CD4-positive, alpha-beta T cell (primary cell): ENCODE measurements at regions of chr10 and their contacts with region 1.

Region 1: GRCh38 chr10:97914837-97915211 is 65.2 kb downstream of the GOLGA7B start:
- DNase-seq: peak; percentile 57 to 80 (median 68)
- ATAC-seq: peak; percentile 84
- H3K4me3 ChIP-seq: no peak overlapping the region
- H3K4me3 Mint-ChIP-seq: no peak overlapping the region
- H3K27ac ChIP-seq: no peak overlapping the region
- H3K27ac Mint-ChIP-seq: no peak overlapping the region
- H3K4me1 ChIP-seq: peaks cover 8% of the 10 kb centered on the region
- H3K4me1 Mint-ChIP-seq: peaks cover 15% of the 10 kb centered on the region
- H3K27me3 ChIP-seq: no peaks in the 10 kb centered on the region
- H3K27me3 Mint-ChIP-seq: peaks cover 21% of the 10 kb centered on the region
- CTCF ChIP-seq: peak; percentile 85

Region 2: GRCh38 chr10:98045785-98046389 is 131.1 kb after region 1 on chr10:
- CTCF ChIA-PET with region 1: interaction called, 14 read pairs
- POLR2A ChIA-PET with region 1: interaction called, 4 read pairs
- intact Hi-C with region 1: loop called (anchors 1 to 2 kb)
- DNase-seq: peak; percentile 29 to 78 (median 44)
- ATAC-seq: peak; percentile 88
- H3K4me3 ChIP-seq: no peak overlapping the region
- H3K4me3 Mint-ChIP-seq: no peak overlapping the region
- H3K27ac ChIP-seq: no peak overlapping the region
- H3K27ac Mint-ChIP-seq: no peak overlapping the region
- H3K4me1 ChIP-seq: peaks cover 3% of the 10 kb centered on the region
- H3K4me1 Mint-ChIP-seq: no peaks in the 10 kb centered on the region
- H3K27me3 ChIP-seq: peaks cover 13 to 25% of the 10 kb centered on the region in 2 experiments
- H3K27me3 Mint-ChIP-seq: peaks cover 39% of the 10 kb centered on the region
- CTCF ChIP-seq: peak; percentile 90

Region 3: DNA sequence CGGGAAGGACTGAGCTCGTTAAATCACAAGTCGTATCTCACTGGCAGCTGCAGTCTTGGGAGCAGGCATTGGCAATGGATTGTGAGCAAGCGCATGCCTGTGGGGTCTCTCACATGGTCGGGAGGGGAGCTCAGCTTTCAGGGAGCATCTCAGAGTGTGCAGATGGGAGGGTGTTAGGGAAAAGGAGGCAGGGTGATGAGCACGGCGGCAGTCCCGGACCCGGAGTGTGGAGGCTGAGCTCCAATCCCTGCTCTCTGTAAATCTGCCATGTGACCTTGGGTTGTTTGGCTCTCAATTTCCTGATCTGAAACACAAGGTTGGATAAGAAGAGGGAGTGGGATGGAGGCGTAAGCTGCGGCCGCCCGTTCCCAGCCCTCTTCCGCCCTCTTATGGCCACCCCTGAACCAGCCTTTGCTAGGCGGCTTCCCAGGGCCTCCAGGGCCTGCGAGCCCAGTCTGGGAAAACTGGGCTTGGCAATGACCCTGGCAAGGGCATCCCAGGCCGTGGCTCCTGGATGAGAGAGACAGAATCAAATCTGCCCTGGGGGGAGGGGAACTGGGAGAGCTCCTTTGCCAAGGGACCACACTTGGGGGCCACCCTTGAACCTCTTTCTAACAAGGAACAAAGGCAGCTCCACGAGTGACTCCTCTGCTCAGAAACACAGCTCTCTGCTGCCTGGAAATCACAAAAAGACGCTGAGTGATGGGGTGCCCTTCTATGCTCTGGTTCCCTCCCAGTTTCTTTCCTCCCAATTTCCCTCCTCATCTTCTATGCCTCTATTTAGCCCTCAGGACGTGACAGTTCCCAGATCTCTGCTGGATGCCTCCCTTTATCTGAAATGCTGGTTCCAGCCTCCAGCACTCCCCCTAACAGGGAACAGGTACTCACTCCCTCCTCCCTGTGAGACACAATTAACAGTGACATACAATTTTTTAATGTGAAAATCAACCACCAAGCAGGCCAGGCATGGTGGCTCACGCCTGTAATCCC is 394.8 kb after region 1 on chr10:
- CTCF ChIA-PET with region 1: no interaction called
- POLR2A ChIA-PET with region 1: no interaction called
- intact Hi-C with region 1: loop called in 1 of 2 experiments (anchors 10 kb)
- DNase-seq: peak in 2 of 14 experiments; percentile 32
- ATAC-seq: no peak
- H3K4me3 ChIP-seq: no peak overlapping the region
- H3K4me3 Mint-ChIP-seq: no peak overlapping the region
- H3K27ac ChIP-seq: no peak overlapping the region
- H3K27ac Mint-ChIP-seq: no peak overlapping the region
- H3K4me1 ChIP-seq: peaks cover 3% of the 10 kb centered on the region
- H3K4me1 Mint-ChIP-seq: no peaks in the 10 kb centered on the region
- H3K27me3 ChIP-seq: peaks cover 15 to 32% of the 10 kb centered on the region in 2 experiments
- H3K27me3 Mint-ChIP-seq: peaks cover 75% of the 10 kb centered on the region
- CTCF ChIP-seq: no peak

Region 4: GRCh38 chr10:98664331-98665042 is 749.7 kb after region 1 on chr10:
- CTCF ChIA-PET with region 1: no interaction called
- POLR2A ChIA-PET with region 1: no interaction called
- intact Hi-C with region 1: loop called in 1 of 2 experiments (anchors 10 kb)
- DNase-seq: peak in 8 of 14 experiments; percentile 0 to 65 (median 27)
- ATAC-seq: no peak
- H3K4me3 ChIP-seq: no peak overlapping the region
- H3K4me3 Mint-ChIP-seq: no peak overlapping the region
- H3K27ac ChIP-seq: no peak overlapping the region
- H3K27ac Mint-ChIP-seq: no peak overlapping the region
- H3K4me1 ChIP-seq: no peaks in the 10 kb centered on the region
- H3K4me1 Mint-ChIP-seq: no peaks in the 10 kb centered on the region
- H3K27me3 ChIP-seq: peaks cover 0 to 3% of the 10 kb centered on the region in 2 experiments
- H3K27me3 Mint-ChIP-seq: peaks cover 31% of the 10 kb centered on the region
- CTCF ChIP-seq: peak; percentile 61

Region 5: DNA sequence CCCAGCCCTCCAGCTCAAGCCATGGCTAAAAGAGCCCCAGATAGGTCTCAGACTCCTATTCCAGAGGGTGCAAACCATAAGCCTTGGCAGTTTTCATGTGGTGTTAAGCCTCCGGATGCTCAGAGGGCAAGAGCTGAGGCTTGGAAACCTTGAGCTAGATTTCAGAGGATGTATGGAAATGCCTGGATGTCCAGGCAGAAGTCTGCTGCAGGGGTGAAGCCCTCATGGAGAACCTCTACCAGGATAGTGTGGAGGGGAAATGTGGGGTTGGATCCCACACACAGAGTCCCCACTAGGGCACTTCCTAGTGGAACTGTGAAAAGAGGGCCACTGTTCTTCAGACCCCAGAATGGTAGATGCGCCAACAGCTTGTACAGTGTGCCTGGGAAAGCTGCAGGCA is 1334.0 kb after region 1 on chr10:
- CTCF ChIA-PET with region 1: no interaction called
- POLR2A ChIA-PET with region 1: no interaction called
- intact Hi-C with region 1: loop called in 1 of 2 experiments (anchors 5 kb)
- DNase-seq: no peak
- ATAC-seq: no peak
- H3K4me3 ChIP-seq: no peak overlapping the region
- H3K4me3 Mint-ChIP-seq: no peak overlapping the region
- H3K27ac ChIP-seq: no peak overlapping the region
- H3K27ac Mint-ChIP-seq: no peak overlapping the region
- H3K4me1 ChIP-seq: no peaks in the 10 kb centered on the region
- H3K4me1 Mint-ChIP-seq: no peaks in the 10 kb centered on the region
- H3K27me3 ChIP-seq: peaks cover 4 to 8% of the 10 kb centered on the region in 2 experiments
- H3K27me3 Mint-ChIP-seq: peaks cover 45% of the 10 kb centered on the region
- CTCF ChIP-seq: no peak